ENCODE measurements at regions of chr21 and their contacts with region 1.

Region 1: GRCh38 chr21:42381334-42381984 is 14.4 kb downstream of the TMPRSS3 start:
- DNase-seq: peak in 6 of 9 experiments; percentile 28 to 71 (median 54)
- ATAC-seq: peak; percentile 59
- H3K4me3 ChIP-seq: no peak overlapping the region
- H3K4me3 Mint-ChIP-seq: no peak overlapping the region
- H3K27ac ChIP-seq: no peak overlapping the region
- H3K27ac Mint-ChIP-seq: peak overlapping the region; percentile 9
- H3K4me1 ChIP-seq: peaks cover 10% of the 10 kb centered on the region
- H3K4me1 Mint-ChIP-seq: peaks cover 15% of the 10 kb centered on the region
- H3K27me3 ChIP-seq: no peaks in the 10 kb centered on the region
- H3K27me3 Mint-ChIP-seq: no peaks in the 10 kb centered on the region
- CTCF ChIP-seq: peak; percentile 44

Region 2: GRCh38 chr21:42392721-42393442 is 11.4 kb after region 1 on chr21:
- CTCF ChIA-PET with region 1: interaction called, 14 read pairs
- POLR2A ChIA-PET with region 1: interaction called, 3 read pairs
- intact Hi-C with region 1: no loop called
- DNase-seq: peak in 4 of 9 experiments; percentile 33 to 79 (median 44)
- ATAC-seq: peak; percentile 92
- H3K4me3 ChIP-seq: peak overlapping the region; percentile 5 to 29
- H3K4me3 Mint-ChIP-seq: peak overlapping the region; percentile 66
- H3K27ac ChIP-seq: peak overlapping the region; percentile 28 to 33
- H3K27ac Mint-ChIP-seq: peak overlapping the region; percentile 89
- H3K4me1 ChIP-seq: peaks cover 31% of the 10 kb centered on the region
- H3K4me1 Mint-ChIP-seq: peaks cover 67% of the 10 kb centered on the region
- H3K27me3 ChIP-seq: no peaks in the 10 kb centered on the region
- H3K27me3 Mint-ChIP-seq: no peaks in the 10 kb centered on the region
- CTCF ChIP-seq: no peak

Region 3: DNA sequence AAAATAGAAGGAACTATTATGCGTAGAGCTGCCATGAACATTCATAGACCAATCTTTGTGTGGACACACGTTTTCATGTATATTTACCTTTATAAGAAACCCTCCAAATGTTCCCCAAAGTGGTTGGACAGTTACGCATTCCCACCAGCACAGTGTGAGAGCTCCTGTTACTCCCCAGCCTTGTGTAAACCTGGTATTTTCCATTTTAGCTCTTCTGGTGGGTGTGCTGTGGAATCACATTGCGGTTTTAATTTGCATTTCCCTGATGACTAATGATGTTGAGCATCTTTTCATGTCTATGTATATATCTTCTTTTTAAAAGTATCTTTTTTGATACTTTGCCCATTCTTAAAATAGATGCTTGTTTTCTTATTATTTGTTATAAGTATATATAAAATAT is 19.1 kb after region 1 on chr21:
- CTCF ChIA-PET with region 1: interaction called, 15 read pairs
- POLR2A ChIA-PET with region 1: interaction called, 17 read pairs
- intact Hi-C with region 1: no loop called
- DNase-seq: peak in 1 of 9 experiments; percentile 60
- ATAC-seq: no peak
- H3K4me3 ChIP-seq: no peak overlapping the region
- H3K4me3 Mint-ChIP-seq: no peak overlapping the region
- H3K27ac ChIP-seq: no peak overlapping the region
- H3K27ac Mint-ChIP-seq: no peak overlapping the region
- H3K4me1 ChIP-seq: peaks cover 39% of the 10 kb centered on the region
- H3K4me1 Mint-ChIP-seq: peaks cover 57% of the 10 kb centered on the region
- H3K27me3 ChIP-seq: no peaks in the 10 kb centered on the region
- H3K27me3 Mint-ChIP-seq: no peaks in the 10 kb centered on the region
- CTCF ChIP-seq: no peak

Region 4: GRCh38 chr21:42449296-42449927 is 68.0 kb after region 1 on chr21:
- CTCF ChIA-PET with region 1: interaction called, 13 read pairs
- POLR2A ChIA-PET with region 1: no interaction called
- intact Hi-C with region 1: loop called (anchors 1 to 2 kb)
- DNase-seq: no peak
- ATAC-seq: no peak
- H3K4me3 ChIP-seq: no peak overlapping the region
- H3K4me3 Mint-ChIP-seq: no peak overlapping the region
- H3K27ac ChIP-seq: peak overlapping the region; percentile 0 to 5
- H3K27ac Mint-ChIP-seq: peak overlapping the region; percentile 98
- H3K4me1 ChIP-seq: peaks cover 15% of the 10 kb centered on the region
- H3K4me1 Mint-ChIP-seq: peaks cover 24% of the 10 kb centered on the region
- H3K27me3 ChIP-seq: no peaks in the 10 kb centered on the region
- H3K27me3 Mint-ChIP-seq: no peaks in the 10 kb centered on the region
- CTCF ChIP-seq: no peak

Region 5: GRCh38 chr21:42454786-42455580 is 73.5 kb after region 1 on chr21:
- CTCF ChIA-PET with region 1: interaction called, 13 read pairs
- POLR2A ChIA-PET with region 1: no interaction called
- intact Hi-C with region 1: loop called (anchors 1 to 2 kb)
- DNase-seq: no peak
- ATAC-seq: no peak
- H3K4me3 ChIP-seq: no peak overlapping the region
- H3K4me3 Mint-ChIP-seq: no peak overlapping the region
- H3K27ac ChIP-seq: no peak overlapping the region
- H3K27ac Mint-ChIP-seq: no peak overlapping the region
- H3K4me1 ChIP-seq: peaks cover 20% of the 10 kb centered on the region
- H3K4me1 Mint-ChIP-seq: peaks cover 35% of the 10 kb centered on the region
- H3K27me3 ChIP-seq: no peaks in the 10 kb centered on the region
- H3K27me3 Mint-ChIP-seq: no peaks in the 10 kb centered on the region
- CTCF ChIP-seq: no peak

Measured in CD8-positive, alpha-beta T cell (primary cell).